ENCODE measurements at regions of chr14 and their contacts with region 1.

Region 1: DNA sequence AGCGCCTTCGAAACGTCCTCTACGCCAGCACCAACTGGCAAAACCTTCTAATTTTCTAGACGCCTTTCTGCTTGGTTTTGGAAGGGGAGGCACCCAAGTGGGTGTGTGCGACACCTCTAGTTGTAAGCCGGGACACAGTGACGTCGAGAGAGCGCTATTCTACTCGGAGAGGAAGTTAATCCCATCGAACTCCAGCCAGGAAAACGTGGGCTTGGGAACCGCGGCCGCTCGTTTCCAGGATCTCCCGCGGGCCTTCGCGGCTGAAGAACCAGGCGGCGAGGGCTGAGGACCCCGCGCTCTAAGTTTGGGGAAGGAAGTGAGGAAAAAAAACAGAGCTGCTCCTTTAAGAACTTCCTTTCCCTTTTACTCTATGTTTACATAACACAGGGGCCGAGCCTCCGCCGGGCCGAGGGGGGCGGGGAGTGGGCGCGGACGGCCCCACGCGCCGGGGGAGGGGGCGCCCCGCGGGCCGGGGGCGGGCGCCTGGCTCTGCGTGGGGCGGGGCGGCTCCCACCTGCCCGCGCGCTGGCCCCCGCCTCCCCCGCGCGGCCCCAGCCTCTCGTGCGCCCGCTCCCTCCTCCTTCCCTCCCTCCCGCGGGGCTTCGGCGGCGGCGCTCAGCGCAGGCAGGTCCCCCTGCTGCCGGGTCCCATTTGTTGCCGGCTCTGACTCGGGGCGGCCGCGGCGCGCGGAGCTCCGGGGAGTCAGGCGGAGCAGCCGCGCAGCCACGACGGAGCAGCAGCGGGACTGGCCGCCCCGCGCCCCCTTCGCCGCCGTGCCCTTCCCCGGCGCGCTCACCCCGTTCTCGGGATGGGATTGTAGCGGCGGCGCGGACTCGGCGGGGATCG is at the start of gene PELI2:
- DNase-seq: peak; percentile 66 to 94 (median 82)
- ATAC-seq: peak; percentile 86
- H3K4me3 ChIP-seq: peak within 1 kb of the TSS; percentile 73 to 74
- H3K4me3 Mint-ChIP-seq: peak within 1 kb of the TSS; percentile 95
- H3K27ac ChIP-seq: peak within 1 kb of the TSS; percentile 67 to 92
- H3K27ac Mint-ChIP-seq: peak within 1 kb of the TSS; percentile 99
- H3K4me1 ChIP-seq: peaks cover 34% of the 10 kb centered on the region
- H3K4me1 Mint-ChIP-seq: peaks cover 49% of the 10 kb centered on the region
- H3K27me3 ChIP-seq: no peaks in the 10 kb centered on the region
- H3K27me3 Mint-ChIP-seq: peaks cover 4% of the 10 kb centered on the region
- CTCF ChIP-seq: no peak
- total RNA-seq, gene PELI2: 13.3 to 15.1 TPM

Region 2: GRCh38 chr14:55339770-55340169 is 778.2 kb before region 1 on chr14:
- CTCF ChIA-PET with region 1: no interaction called
- POLR2A ChIA-PET with region 1: no interaction called
- intact Hi-C with region 1: loop called in 1 of 2 experiments (anchors 5 kb)
- DNase-seq: peak in 2 of 9 experiments; percentile 19 to 26
- ATAC-seq: no peak
- H3K4me3 ChIP-seq: no peak overlapping the region
- H3K4me3 Mint-ChIP-seq: no peak overlapping the region
- H3K27ac ChIP-seq: no peak overlapping the region
- H3K27ac Mint-ChIP-seq: peak overlapping the region; percentile 24
- H3K4me1 ChIP-seq: peaks cover 35% of the 10 kb centered on the region
- H3K4me1 Mint-ChIP-seq: peaks cover 64% of the 10 kb centered on the region
- H3K27me3 ChIP-seq: no peaks in the 10 kb centered on the region
- H3K27me3 Mint-ChIP-seq: no peaks in the 10 kb centered on the region
- CTCF ChIP-seq: no peak

Region 3: DNA sequence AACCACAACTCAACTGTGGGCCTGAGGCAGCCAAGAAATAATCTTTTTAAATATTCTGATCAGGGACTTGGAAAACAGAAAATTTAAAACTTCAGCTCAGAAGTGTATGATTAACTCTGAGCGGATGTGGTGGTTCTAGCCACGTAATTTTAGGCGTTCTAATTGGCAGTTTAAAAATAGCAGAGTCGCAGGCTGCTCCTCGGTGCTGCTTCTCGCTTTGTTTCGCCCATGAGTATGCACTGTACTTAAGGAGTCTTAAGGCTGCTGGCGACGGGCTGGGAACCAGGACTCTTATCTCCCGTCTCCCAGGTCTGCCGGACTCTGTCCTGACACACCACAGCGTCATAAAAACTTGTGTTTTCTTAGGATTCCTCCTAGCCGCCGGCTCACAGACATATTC is 113.2 kb before region 1 on chr14:
- CTCF ChIA-PET with region 1: no interaction called
- POLR2A ChIA-PET with region 1: interaction called, 4 read pairs
- intact Hi-C with region 1: loop called (anchors 5 kb)
- DNase-seq: peak in 6 of 9 experiments; percentile 3 to 53 (median 34)
- ATAC-seq: peak; percentile 60
- H3K4me3 ChIP-seq: no peak overlapping the region
- H3K4me3 Mint-ChIP-seq: peak overlapping the region; percentile 55
- H3K27ac ChIP-seq: no peak overlapping the region
- H3K27ac Mint-ChIP-seq: no peak overlapping the region
- H3K4me1 ChIP-seq: peaks cover 38% of the 10 kb centered on the region
- H3K4me1 Mint-ChIP-seq: peaks cover 42% of the 10 kb centered on the region
- H3K27me3 ChIP-seq: peaks cover 3 to 34% of the 10 kb centered on the region in 2 experiments
- H3K27me3 Mint-ChIP-seq: peaks cover 61% of the 10 kb centered on the region
- CTCF ChIP-seq: no peak

Region 4: GRCh38 chr14:56342494-56342942 is 224.5 kb after region 1 on chr14:
- CTCF ChIA-PET with region 1: no interaction called
- POLR2A ChIA-PET with region 1: no interaction called
- intact Hi-C with region 1: no loop called
- DNase-seq: no peak
- ATAC-seq: no peak
- H3K4me3 ChIP-seq: no peak overlapping the region
- H3K4me3 Mint-ChIP-seq: no peak overlapping the region
- H3K27ac ChIP-seq: no peak overlapping the region
- H3K27ac Mint-ChIP-seq: no peak overlapping the region
- H3K4me1 ChIP-seq: no peaks in the 10 kb centered on the region
- H3K4me1 Mint-ChIP-seq: peaks cover 3% of the 10 kb centered on the region
- H3K27me3 ChIP-seq: no peaks in the 10 kb centered on the region
- H3K27me3 Mint-ChIP-seq: no peaks in the 10 kb centered on the region
- CTCF ChIP-seq: no peak

Region 5: GRCh38 chr14:56579345-56580220 is 461.6 kb after region 1 on chr14 and contains the start of gene TMEM260:
- CTCF ChIA-PET with region 1: no interaction called
- POLR2A ChIA-PET with region 1: interaction called, 3 read pairs
- intact Hi-C with region 1: loop called (anchors 1 to 10 kb)
- DNase-seq: peak; percentile 84 to 95 (median 91)
- ATAC-seq: peak; percentile 93
- H3K4me3 ChIP-seq: peak within 1 kb of the TSS; percentile 74 to 83
- H3K4me3 Mint-ChIP-seq: peak within 1 kb of the TSS; percentile 90
- H3K27ac ChIP-seq: peak within 1 kb of the TSS; percentile 72 to 75
- H3K27ac Mint-ChIP-seq: peak within 1 kb of the TSS; percentile 94
- H3K4me1 ChIP-seq: peaks cover 27% of the 10 kb centered on the region
- H3K4me1 Mint-ChIP-seq: peaks cover 40% of the 10 kb centered on the region
- H3K27me3 ChIP-seq: no peaks in the 10 kb centered on the region
- H3K27me3 Mint-ChIP-seq: peaks cover 2% of the 10 kb centered on the region
- CTCF ChIP-seq: peak; percentile 82
- total RNA-seq, gene TMEM260: 4.3 to 6.4 TPM

Region 6: DNA sequence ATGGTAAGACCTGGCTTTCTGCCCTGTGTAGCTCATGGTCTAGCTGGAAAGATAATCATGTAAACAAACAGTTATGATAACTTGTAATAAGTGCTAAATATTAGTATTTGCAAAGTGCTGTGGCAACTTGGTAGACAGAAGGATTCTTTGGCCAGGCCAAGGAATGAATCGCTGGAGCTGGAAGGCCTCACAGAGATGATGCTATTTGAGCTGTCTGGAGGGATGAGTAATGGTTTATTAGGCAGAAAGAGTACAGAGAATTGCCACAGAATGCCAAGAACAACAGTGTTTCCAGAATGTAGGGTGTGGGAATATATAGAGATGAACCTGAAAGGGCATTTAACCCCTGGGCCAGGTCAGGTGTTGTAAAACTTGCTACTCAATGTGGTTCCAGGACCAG is 664.7 kb after region 1 on chr14:
- CTCF ChIA-PET with region 1: no interaction called
- POLR2A ChIA-PET with region 1: no interaction called
- intact Hi-C with region 1: no loop called
- DNase-seq: no peak
- ATAC-seq: no peak
- H3K4me3 ChIP-seq: no peak overlapping the region
- H3K4me3 Mint-ChIP-seq: no peak overlapping the region
- H3K27ac ChIP-seq: no peak overlapping the region
- H3K27ac Mint-ChIP-seq: no peak overlapping the region
- H3K4me1 ChIP-seq: no peaks in the 10 kb centered on the region
- H3K4me1 Mint-ChIP-seq: no peaks in the 10 kb centered on the region
- H3K27me3 ChIP-seq: peaks cover 0 to 3% of the 10 kb centered on the region in 2 experiments
- H3K27me3 Mint-ChIP-seq: peaks cover 12% of the 10 kb centered on the region
- CTCF ChIP-seq: no peak

Region 7: GRCh38 chr14:57390028-57390805 is 1272.2 kb after region 1 on chr14 and contains the start of gene NAA30:
- CTCF ChIA-PET with region 1: no interaction called
- POLR2A ChIA-PET with region 1: interaction called, 6 read pairs
- intact Hi-C with region 1: loop called (anchors 2 to 5 kb)
- DNase-seq: peak; percentile 82 to 97 (median 92)
- ATAC-seq: peak; percentile 93
- H3K4me3 ChIP-seq: peak within 1 kb of the TSS; percentile 46 to 83
- H3K4me3 Mint-ChIP-seq: peak within 1 kb of the TSS; percentile 94
- H3K27ac ChIP-seq: peak within 1 kb of the TSS; percentile 48 to 82
- H3K27ac Mint-ChIP-seq: peak within 1 kb of the TSS; percentile 94
- H3K4me1 ChIP-seq: peaks cover 27% of the 10 kb centered on the region
- H3K4me1 Mint-ChIP-seq: peaks cover 42% of the 10 kb centered on the region
- H3K27me3 ChIP-seq: no peaks in the 10 kb centered on the region
- H3K27me3 Mint-ChIP-seq: no peaks in the 10 kb centered on the region
- CTCF ChIP-seq: no peak
- total RNA-seq, gene NAA30: 26.4 to 31.2 TPM